Activated CD8-positive, alpha-beta T cell treated with anti-CD3 and anti-CD28 coated beads, Interleukin-2, amount 10 ng/mL, durations not matched to agents 7 days and 5 days (primary cell): ENCODE measurements at regions of chr6 and their contacts with region 1.

Region 1: DNA sequence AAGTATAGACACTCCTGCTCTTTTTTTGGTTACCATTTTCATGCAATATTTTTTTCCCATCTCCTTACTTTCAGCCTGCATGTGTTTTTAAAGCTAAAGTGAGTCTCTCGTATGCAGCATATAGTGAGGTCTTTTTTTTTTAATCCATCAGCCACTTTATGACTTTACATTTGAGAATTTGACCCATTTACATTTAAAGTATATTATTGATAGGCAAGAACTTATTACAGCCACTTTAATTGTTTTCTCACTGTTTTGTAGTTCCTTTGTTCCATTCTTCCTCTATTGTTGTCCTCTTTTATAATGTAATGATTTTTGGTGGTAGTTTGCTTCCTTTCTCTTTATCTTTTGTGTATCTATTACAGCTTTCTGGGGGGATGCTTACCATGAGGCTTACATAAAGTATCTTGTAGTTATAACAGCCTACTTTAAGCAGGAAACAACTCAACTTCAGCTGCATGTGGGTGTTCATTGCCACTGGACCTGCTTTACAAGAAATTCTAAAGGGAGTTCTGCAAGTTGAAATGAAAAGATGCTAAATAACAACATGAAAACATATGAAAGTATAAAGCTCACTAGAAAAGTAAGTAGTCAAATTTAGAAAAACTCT is 71.8 kb downstream of the TNFAIP3 start:
- DNase-seq: no peak
- ATAC-seq: no peak
- H3K4me3 Mint-ChIP-seq: no peak overlapping the region
- H3K27ac Mint-ChIP-seq: no peak overlapping the region
- H3K4me1 Mint-ChIP-seq: peaks cover 18% of the 10 kb centered on the region
- H3K27me3 Mint-ChIP-seq: no peaks in the 10 kb centered on the region

Region 2: GRCh38 chr6:137878486-137879285 is 60.2 kb before region 1 on chr6:
- CTCF ChIA-PET with region 1: interaction called, 555 read pairs
- POLR2A ChIA-PET with region 1: interaction called, 12 read pairs
- DNase-seq: no peak
- ATAC-seq: no peak
- H3K4me3 Mint-ChIP-seq: no peak overlapping the region
- H3K27ac Mint-ChIP-seq: peak overlapping the region; percentile 46
- H3K4me1 Mint-ChIP-seq: peaks cover 75% of the 10 kb centered on the region
- H3K27me3 Mint-ChIP-seq: no peaks in the 10 kb centered on the region

Region 3: GRCh38 chr6:137910424-137910834 is 28.4 kb before region 1 on chr6:
- CTCF ChIA-PET with region 1: interaction called, 12 read pairs
- POLR2A ChIA-PET with region 1: no interaction called
- DNase-seq: no peak
- ATAC-seq: no peak
- H3K4me3 Mint-ChIP-seq: no peak overlapping the region
- H3K27ac Mint-ChIP-seq: no peak overlapping the region
- H3K4me1 Mint-ChIP-seq: peaks cover 45% of the 10 kb centered on the region
- H3K27me3 Mint-ChIP-seq: no peaks in the 10 kb centered on the region

Region 4: GRCh38 chr6:137915790-137916189 is 23.1 kb before region 1 on chr6:
- CTCF ChIA-PET with region 1: interaction called, 12 read pairs
- POLR2A ChIA-PET with region 1: no interaction called
- DNase-seq: no peak
- ATAC-seq: no peak
- H3K4me3 Mint-ChIP-seq: no peak overlapping the region
- H3K27ac Mint-ChIP-seq: no peak overlapping the region
- H3K4me1 Mint-ChIP-seq: peaks cover 6% of the 10 kb centered on the region
- H3K27me3 Mint-ChIP-seq: no peaks in the 10 kb centered on the region

Region 5: GRCh38 chr6:137921823-137922222 is 17.1 kb before region 1 on chr6:
- CTCF ChIA-PET with region 1: interaction called, 49 read pairs
- POLR2A ChIA-PET with region 1: interaction called, 3 read pairs
- DNase-seq: no peak
- ATAC-seq: no peak
- H3K4me3 Mint-ChIP-seq: no peak overlapping the region
- H3K27ac Mint-ChIP-seq: no peak overlapping the region
- H3K4me1 Mint-ChIP-seq: peaks cover 21% of the 10 kb centered on the region
- H3K27me3 Mint-ChIP-seq: no peaks in the 10 kb centered on the region

Region 6: GRCh38 chr6:138176652-138177232 is 237.9 kb after region 1 on chr6:
- CTCF ChIA-PET with region 1: no interaction called
- POLR2A ChIA-PET with region 1: no interaction called
- DNase-seq: no peak
- ATAC-seq: no peak
- H3K4me3 Mint-ChIP-seq: no peak overlapping the region
- H3K27ac Mint-ChIP-seq: no peak overlapping the region
- H3K4me1 Mint-ChIP-seq: no peaks in the 10 kb centered on the region
- H3K27me3 Mint-ChIP-seq: peaks cover 18% of the 10 kb centered on the region